Breast epithelium (tissue), 4 donors: ENCODE measurements at regions of chr13 and their contacts with region 1.

Region 1: GRCh38 chr13:61247149-61247936 is 168.3 kb downstream of the PCDH20 start:
- DNase-seq: no peak
- H3K4me3 ChIP-seq: no peak overlapping the region
- H3K27ac ChIP-seq: no peak overlapping the region
- H3K4me1 ChIP-seq: no peaks in the 10 kb centered on the region
- H3K27me3 ChIP-seq: no peaks in the 10 kb centered on the region
- CTCF ChIP-seq: no peak
- POLR2A ChIP-seq: no peak

Region 2: DNA sequence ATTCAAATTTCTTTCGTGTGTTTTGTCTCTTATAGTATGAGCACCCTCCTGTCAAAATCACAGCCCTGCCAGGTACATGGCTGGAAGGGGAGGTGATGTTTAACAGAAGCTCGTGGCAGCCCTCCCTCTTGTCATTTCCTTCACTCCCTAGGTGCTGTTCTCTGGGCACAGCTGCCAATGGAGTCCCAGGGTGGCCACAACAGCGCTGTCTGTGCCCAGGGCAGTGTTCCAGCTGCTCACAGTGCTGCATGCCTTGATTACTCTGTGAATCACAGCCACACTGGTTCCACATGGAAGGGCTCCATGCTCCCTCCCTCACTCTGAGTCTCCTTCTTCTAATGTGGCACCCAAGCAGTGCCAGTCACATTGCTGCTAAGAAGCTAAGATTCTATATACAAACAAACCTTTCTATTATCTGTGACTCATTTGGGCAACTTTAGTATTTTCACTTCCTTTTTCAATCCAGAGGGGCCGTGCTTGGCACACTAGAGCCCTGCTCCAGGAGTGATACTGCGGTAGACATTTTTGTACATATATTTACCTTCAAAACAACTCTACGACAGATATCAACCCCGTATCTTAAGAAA is 601.7 kb before region 1 on chr13:
- intact Hi-C with region 1: loop called (anchors 5 kb)
- DNase-seq: no peak
- H3K4me3 ChIP-seq: no peak overlapping the region
- H3K27ac ChIP-seq: no peak overlapping the region
- H3K4me1 ChIP-seq: no peaks in the 10 kb centered on the region
- H3K27me3 ChIP-seq: no peaks in the 10 kb centered on the region
- CTCF ChIP-seq: no peak
- POLR2A ChIP-seq: no peak

Region 3: DNA sequence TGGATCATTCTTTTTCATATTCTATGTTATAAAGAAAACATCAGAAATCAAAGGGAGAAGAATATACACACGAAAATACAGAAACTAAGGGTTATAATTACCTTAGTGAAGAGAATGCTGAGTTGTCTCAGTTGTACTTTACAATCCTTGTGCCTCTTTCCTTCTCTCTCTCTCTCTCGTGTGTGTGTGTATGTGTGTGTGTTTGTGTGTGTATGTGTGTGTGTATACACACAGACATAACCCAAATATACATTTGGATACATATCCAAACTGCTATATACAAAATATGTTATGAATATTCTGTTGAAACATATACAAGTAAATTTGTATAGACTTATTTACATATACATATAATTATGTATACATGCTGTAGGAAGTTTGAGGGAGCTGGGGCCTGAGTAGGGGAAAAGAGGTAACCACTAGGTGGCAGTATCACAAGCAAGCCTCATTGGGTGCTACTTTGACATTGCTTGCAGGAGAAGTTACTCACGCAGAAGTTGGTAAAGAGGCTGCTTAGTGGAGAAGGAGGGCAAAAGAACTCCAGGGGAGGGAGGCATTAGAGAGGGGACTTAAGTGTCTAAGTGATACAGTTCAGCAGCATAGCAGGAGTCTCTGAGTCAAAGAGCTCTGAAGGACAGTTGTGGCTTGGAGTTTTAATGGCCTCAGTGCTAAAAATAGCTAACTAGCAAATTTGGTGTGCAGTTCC is 633.4 kb after region 1 on chr13:
- intact Hi-C with region 1: loop called (anchors 10 kb)
- DNase-seq: no peak
- H3K4me3 ChIP-seq: no peak overlapping the region
- H3K27ac ChIP-seq: no peak overlapping the region
- H3K4me1 ChIP-seq: no peaks in the 10 kb centered on the region
- H3K27me3 ChIP-seq: no peaks in the 10 kb centered on the region
- CTCF ChIP-seq: no peak
- POLR2A ChIP-seq: no peak